Ascending aorta (tissue), 2 donors: ENCODE measurements at regions of chr2 and their contacts with region 1.

Region 1: DNA sequence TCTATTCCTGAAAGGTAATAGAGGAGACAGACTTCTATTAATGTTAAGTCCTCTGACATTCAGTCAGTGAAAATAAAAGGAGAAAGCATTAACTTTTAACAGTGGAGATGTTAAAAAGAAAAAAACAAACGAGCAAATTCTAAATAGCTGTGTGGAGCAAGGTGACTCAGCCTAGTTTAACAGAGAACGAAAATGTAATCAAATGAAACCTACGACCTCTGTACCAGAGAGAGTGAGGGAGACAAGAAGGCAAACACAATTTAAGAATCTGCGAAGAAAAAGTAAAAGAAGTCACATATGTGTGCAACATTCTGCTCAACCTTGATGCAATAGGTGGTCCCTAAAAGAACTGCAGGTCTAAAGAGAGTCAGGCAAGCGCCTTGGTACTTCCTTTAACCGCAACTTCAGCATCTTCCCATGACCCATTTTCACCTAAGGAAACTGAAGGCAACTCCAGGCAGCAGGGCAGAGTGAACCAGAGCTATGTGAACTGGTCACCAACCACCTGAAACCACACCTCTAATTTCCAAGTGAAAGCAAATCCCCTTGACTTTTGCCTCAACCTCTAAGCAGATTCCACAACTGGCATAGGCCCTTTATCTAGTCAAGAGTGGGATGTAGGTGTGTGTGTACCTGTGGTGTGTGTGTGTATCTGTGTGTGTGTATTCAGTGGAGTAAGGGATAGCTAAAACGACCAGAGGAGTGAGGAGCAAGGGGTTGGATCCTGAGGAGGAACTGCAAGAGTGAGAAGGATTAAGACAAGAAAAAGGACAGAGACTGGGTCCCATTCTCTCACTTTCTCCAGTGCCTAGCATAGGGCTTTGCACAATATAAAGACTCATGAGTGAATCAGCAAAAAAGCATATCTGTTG is 43.0 kb downstream of the FIGN start:
- DNase-seq: no peak
- H3K4me3 ChIP-seq: peak overlapping the region in 1 of 2 donors; percentile 23
- H3K27ac ChIP-seq: peak overlapping the region; percentile 66 to 80
- H3K4me1 ChIP-seq: peaks cover 4 to 42% of the 10 kb centered on the region in 2 donors
- H3K27me3 ChIP-seq: no peaks in the 10 kb centered on the region
- CTCF ChIP-seq: no peak

Region 2: DNA sequence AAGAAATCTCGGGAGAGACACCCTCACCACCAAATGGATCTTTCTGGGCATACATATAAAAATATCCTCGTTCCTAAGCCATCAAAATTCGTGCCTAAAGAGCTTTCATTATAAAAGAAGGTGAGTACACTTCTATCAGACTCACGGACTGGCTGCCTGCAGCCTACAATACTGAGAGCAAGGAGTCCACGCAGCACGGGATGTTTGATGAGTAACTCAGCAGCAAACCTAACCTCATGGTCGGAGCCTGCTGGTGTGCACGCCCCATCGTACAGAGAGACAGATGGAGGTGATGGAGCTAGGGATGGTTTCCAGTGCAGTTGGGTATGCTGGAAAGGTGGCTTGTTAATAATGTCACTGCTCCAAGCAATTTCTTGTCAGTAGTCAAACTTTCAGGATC is 213.2 kb before region 1 on chr2:
- intact Hi-C with region 1: no loop called
- DNase-seq: no peak
- H3K4me3 ChIP-seq: no peak overlapping the region
- H3K27ac ChIP-seq: no peak overlapping the region
- H3K4me1 ChIP-seq: no peaks in the 10 kb centered on the region
- H3K27me3 ChIP-seq: no peaks in the 10 kb centered on the region
- CTCF ChIP-seq: no peak

Region 3: DNA sequence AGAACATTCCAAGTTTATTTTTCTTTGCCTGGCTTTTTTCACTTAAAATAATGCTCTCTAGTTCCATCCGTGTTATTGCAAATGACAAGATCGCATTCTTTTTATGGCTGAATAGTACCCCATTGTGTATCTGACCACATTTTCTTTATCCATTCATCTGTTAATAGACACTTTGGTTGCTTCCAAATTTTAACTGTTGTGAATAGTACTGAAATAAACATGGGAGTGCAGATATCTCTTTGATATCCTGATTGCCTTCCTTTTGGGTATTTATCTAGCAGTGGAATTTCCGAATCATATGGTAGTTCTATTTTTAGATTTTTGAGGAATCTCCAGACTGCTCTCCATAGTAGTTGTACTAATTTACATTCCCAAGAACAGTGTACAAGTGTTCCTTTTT is 187.6 kb before region 1 on chr2:
- intact Hi-C with region 1: no loop called
- DNase-seq: no peak
- H3K4me3 ChIP-seq: no peak overlapping the region
- H3K27ac ChIP-seq: no peak overlapping the region
- H3K4me1 ChIP-seq: no peaks in the 10 kb centered on the region
- H3K27me3 ChIP-seq: no peaks in the 10 kb centered on the region
- CTCF ChIP-seq: no peak

Region 4: GRCh38 chr2:163657281-163657656 is 35.6 kb before region 1 on chr2:
- intact Hi-C with region 1: loop called (anchors 5 kb)
- DNase-seq: no peak
- H3K4me3 ChIP-seq: no peak overlapping the region
- H3K27ac ChIP-seq: peak overlapping the region; percentile 26 to 43
- H3K4me1 ChIP-seq: peaks cover 0 to 32% of the 10 kb centered on the region in 2 donors
- H3K27me3 ChIP-seq: no peaks in the 10 kb centered on the region
- CTCF ChIP-seq: no peak